AG04450 (cell line): ENCODE measurements at regions of chr17 and their contacts with region 1.

Region 1: GRCh38 chr17:48618256-48618897 is 3.3 kb upstream of the HOXB8 start:
- DNase-seq: no peak
- H3K4me3 ChIP-seq: no peak overlapping the region
- H3K27ac ChIP-seq: no peak overlapping the region
- H3K27me3 ChIP-seq: peaks cover 96% of the 10 kb centered on the region
- CTCF ChIP-seq: peak; percentile 96

Region 2: DNA sequence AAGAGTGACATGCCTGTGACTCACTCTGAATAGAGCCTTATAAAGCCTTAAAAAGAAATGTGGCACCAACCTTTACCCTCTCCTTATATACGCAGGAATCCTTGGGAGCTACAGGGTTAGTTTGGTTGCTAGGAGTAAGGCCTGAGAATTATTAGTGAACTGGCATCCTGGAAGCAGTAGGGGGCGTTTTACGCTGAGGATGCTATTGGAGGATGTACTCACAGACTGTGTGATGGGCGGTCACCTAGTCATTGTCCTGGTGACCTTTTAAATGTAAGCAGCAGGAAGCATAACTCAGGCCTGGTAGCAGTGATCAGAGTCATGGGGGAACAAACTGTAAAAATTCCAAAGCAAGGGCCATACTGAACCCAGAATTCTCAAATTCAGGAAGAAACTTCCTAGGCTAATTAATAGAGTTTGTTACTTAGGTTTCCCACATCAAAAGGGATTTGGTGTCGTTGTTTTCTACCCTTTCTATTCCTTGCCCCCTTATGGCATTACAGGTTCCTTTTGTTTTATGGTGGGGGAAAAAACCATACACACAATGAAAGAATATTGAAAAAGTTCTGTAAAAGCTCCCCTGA is 357.0 kb before region 1 on chr17:
- CTCF ChIA-PET with region 1: interaction called, 19 read pairs
- POLR2A ChIA-PET with region 1: no interaction called
- DNase-seq: no peak
- H3K4me3 ChIP-seq: no peak overlapping the region
- H3K27ac ChIP-seq: no peak overlapping the region
- H3K27me3 ChIP-seq: peaks cover 26% of the 10 kb centered on the region
- CTCF ChIP-seq: peak; percentile 53

Region 3: GRCh38 chr17:48307814-48308411 is 310.5 kb before region 1 on chr17:
- CTCF ChIA-PET with region 1: interaction called, 41 read pairs
- POLR2A ChIA-PET with region 1: no interaction called
- DNase-seq: peak; percentile 32
- H3K4me3 ChIP-seq: no peak overlapping the region
- H3K27ac ChIP-seq: no peak overlapping the region
- H3K27me3 ChIP-seq: peaks cover 51% of the 10 kb centered on the region
- CTCF ChIP-seq: peak; percentile 96

Region 4: DNA sequence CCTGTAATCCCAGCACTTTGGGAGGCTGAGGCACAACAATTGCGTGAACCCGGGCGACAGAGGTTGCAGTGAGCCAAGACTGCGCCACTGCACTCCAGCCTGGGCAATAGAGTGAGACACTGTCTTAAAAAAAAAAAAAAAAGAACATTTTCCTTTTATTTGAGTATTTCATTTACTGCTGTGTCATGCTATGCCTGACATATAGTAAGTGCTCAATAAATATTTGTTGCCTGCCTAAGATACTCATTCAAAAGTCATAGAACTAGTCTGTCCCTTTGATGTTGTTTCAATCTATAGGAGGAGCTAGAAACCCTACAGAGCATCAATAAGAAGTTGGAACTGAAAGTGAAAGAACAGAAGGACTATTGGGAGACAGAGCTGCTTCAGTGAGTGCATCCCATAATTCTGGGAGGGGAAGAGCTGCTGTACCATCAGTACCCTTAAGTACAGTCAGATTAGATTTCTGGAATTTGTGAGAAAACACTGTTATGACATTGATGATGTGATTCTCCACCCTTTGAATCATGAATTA is 232.5 kb after region 1 on chr17:
- CTCF ChIA-PET with region 1: no interaction called
- POLR2A ChIA-PET with region 1: no interaction called
- DNase-seq: no peak
- H3K4me3 ChIP-seq: no peak overlapping the region
- H3K27ac ChIP-seq: no peak overlapping the region
- H3K27me3 ChIP-seq: no peaks in the 10 kb centered on the region
- CTCF ChIP-seq: no peak